Activated naive CD4-positive, alpha-beta T cell treated with anti-CD3 and anti-CD28 coated beads, Interleukin-2, amount 10 ng/mL, durations not matched to agents 7 days and 5 days (primary cell): ENCODE measurements at regions of chr18 and their contacts with region 1.

Region 1: DNA sequence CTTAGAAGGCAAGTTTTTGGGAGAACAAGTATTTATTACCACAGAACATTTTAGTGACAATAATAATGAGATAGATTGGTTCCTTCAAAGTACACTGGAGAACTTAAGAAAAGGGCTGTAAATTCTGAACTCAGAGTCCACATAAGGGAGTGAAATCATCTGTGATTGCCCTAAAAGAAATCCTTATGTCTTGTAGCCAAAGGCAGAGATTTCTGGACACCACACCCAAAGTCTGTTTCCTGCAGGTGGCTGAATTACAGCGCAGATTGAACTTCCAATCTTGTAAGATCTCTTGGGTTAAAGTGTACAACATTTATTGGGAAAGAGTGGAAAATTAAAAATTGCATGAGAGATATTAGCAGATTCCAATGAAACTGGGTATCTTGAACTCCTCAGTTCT is 143.8 kb downstream of the TAF4B start:
- DNase-seq: no peak
- H3K4me3 Mint-ChIP-seq: no peak overlapping the region
- H3K27ac Mint-ChIP-seq: no peak overlapping the region
- H3K4me1 Mint-ChIP-seq: no peaks in the 10 kb centered on the region
- H3K27me3 Mint-ChIP-seq: no peaks in the 10 kb centered on the region

Region 2: GRCh38 chr18:26383454-26384270 is 13.6 kb after region 1 on chr18:
- CTCF ChIA-PET with region 1: interaction called, 21 read pairs
- DNase-seq: no peak
- H3K4me3 Mint-ChIP-seq: no peak overlapping the region
- H3K27ac Mint-ChIP-seq: no peak overlapping the region
- H3K4me1 Mint-ChIP-seq: no peaks in the 10 kb centered on the region
- H3K27me3 Mint-ChIP-seq: no peaks in the 10 kb centered on the region

Region 3: DNA sequence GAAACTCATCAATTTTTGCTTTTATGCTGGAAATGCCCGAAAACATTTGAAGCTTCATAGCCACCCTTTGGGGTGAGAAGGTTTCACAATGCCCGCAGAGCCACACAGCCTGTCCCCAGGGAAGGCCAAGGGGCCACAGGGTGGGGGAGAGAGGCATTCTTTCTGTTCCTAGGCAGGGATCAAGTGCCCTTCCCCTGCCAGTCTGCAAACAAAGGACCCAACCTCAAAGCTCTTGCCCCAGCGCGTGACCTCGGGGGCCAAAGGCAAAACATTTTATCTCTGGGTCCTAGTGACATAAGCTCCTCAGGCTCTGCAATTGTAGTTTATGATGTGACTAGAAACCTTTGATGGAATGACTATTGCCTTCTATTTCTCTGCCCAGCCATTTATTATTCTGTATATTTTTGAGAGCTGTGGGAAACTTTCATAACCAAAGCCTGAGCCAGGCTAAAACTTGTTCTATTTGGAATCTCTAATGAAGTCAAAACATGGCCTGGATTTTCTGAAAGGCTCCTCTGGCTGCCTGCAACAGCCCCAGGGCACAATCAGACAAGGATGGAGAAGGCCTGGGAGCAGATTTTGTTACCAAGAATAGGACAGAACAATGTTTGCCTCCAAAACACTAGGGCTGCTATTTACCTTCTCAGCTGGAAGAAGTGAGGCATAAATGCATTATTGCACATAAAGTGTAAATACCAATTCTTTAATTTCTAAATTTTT is 315.6 kb after region 1 on chr18:
- CTCF ChIA-PET with region 1: no interaction called
- DNase-seq: no peak
- H3K4me3 Mint-ChIP-seq: no peak overlapping the region
- H3K27ac Mint-ChIP-seq: no peak overlapping the region
- H3K4me1 Mint-ChIP-seq: no peaks in the 10 kb centered on the region
- H3K27me3 Mint-ChIP-seq: no peaks in the 10 kb centered on the region